OCI-LY7 (cell line): ENCODE measurements at regions of chr12 and their contacts with region 1.

Region 1: DNA sequence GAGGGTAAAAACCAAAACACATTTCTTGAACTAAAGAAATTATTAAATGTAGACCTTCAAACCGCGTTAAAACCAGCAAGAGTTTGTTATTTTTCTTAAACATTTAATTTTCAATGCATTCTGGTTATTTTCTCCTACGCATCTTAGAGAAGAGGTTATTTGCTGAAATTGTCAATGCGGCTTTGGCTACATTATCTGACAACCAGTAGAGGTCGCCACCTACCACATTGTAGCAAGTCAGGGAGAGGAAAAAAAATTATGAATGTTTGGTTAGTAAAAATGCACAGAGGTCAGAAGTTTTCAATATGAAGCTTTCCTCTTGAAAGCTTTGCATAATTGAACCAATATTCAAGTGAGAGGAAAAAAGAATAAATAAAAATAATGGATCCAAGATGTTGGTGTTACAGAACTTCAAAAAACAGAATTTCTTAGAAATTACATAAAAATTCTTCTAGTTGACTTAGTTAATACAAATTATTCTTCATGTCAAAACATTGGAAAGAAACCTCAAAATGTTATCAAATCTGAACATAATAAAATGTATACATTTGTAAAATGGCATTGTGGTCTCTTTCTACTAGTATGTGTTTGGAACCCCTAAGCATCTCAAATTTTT is 159.4 kb upstream of the TMTC2 start:
- DNase-seq: peak; percentile 66
- H3K4me3 ChIP-seq: no peak overlapping the region
- H3K27ac ChIP-seq: no peak overlapping the region
- H3K4me1 ChIP-seq: no peaks in the 10 kb centered on the region
- CTCF ChIP-seq: peak; percentile 99

Region 2: GRCh38 chr12:83823431-83823963 is 1296.2 kb after region 1 on chr12:
- CTCF ChIA-PET with region 1: no interaction called
- POLR2A ChIA-PET with region 1: no interaction called
- intact Hi-C with region 1: loop called (anchors 5 kb)
- DNase-seq: peak; percentile 55
- H3K4me3 ChIP-seq: no peak overlapping the region
- H3K27ac ChIP-seq: no peak overlapping the region
- H3K4me1 ChIP-seq: no peaks in the 10 kb centered on the region
- CTCF ChIP-seq: peak; percentile 70

Region 3: GRCh38 chr12:84502907-84503787 is 1975.9 kb after region 1 on chr12:
- CTCF ChIA-PET with region 1: no interaction called
- POLR2A ChIA-PET with region 1: no interaction called
- intact Hi-C with region 1: loop called (anchors 5 kb)
- DNase-seq: peak; percentile 37
- H3K4me3 ChIP-seq: no peak overlapping the region
- H3K27ac ChIP-seq: no peak overlapping the region
- H3K4me1 ChIP-seq: no peaks in the 10 kb centered on the region
- CTCF ChIP-seq: peak; percentile 80